B cell (primary cell): ENCODE measurements at regions of chrX and their contacts with region 1.

Region 1: DNA sequence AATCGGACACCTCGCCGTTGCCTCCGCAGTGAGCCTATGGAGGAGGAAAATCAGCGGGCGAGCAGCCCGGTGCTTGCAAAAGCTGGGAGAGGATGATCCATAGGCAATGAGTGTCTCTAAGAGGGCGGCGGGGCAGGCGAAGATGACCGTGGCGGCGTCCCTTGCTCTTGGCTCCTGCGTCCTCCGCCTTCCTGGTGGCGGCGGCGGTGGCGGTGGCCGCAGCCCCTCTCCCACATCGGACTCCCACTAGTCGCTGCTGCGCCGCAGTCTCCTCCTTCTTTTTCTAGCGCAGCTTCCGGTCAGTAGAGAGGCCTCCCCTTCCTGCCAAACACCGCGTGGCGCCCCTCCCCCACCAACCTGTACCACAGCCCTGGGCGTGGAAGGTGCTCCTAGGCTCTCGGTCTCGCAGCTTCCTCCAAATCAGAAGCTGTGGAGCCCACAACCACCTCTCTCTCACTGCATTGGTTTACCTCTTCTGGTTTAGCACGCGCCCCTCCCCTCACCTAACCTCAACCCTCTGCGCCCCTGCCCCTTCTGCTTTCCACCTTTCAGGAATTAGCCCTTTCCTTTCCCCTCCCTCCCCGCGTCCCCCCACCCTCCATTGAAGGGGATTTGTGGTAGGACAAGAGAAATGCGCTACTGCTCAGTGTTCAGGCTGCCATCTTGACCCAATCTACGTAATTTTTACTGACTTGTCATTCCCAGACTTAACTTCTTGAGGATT is at the start of gene SPIN3:
- DNase-seq: peak; percentile 55
- ATAC-seq: peak; percentile 80
- H3K4me3 ChIP-seq: peak within 1 kb of the TSS in 4 of 5 experiments; percentile 48 to 58 (median 52)
- H3K4me3 Mint-ChIP-seq: peak within 1 kb of the TSS; percentile 96
- H3K27ac ChIP-seq: peak within 1 kb of the TSS; percentile 41 to 55
- H3K27ac Mint-ChIP-seq: peak within 1 kb of the TSS; percentile 92
- H3K4me1 ChIP-seq: peaks cover 3% of the 10 kb centered on the region in 2 donors
- H3K4me1 Mint-ChIP-seq: peaks cover 29% of the 10 kb centered on the region
- H3K27me3 ChIP-seq: peaks cover 0 to 5% (median 0%) of the 10 kb centered on the region in 4 experiments
- H3K27me3 Mint-ChIP-seq: no peaks in the 10 kb centered on the region
- CTCF ChIP-seq: no peak
- total RNA-seq, gene SPIN3: 19.4 and 20.6 TPM in 2 replicates

Region 2: GRCh38 chrX:56920338-56920997 is 75.0 kb before region 1 on chrX:
- CTCF ChIA-PET with region 1: no interaction called
- POLR2A ChIA-PET with region 1: no interaction called
- intact Hi-C with region 1: no loop called
- DNase-seq: no peak
- ATAC-seq: no peak
- H3K4me3 ChIP-seq: no peak overlapping the region
- H3K4me3 Mint-ChIP-seq: no peak overlapping the region
- H3K27ac ChIP-seq: no peak overlapping the region
- H3K27ac Mint-ChIP-seq: no peak overlapping the region
- H3K4me1 ChIP-seq: no peaks in the 10 kb centered on the region
- H3K4me1 Mint-ChIP-seq: no peaks in the 10 kb centered on the region
- H3K27me3 ChIP-seq: no peaks in the 10 kb centered on the region
- H3K27me3 Mint-ChIP-seq: no peaks in the 10 kb centered on the region
- CTCF ChIP-seq: no peak

Region 3: GRCh38 chrX:57453901-57454300 is 458.5 kb after region 1 on chrX:
- CTCF ChIA-PET with region 1: no interaction called
- POLR2A ChIA-PET with region 1: no interaction called
- intact Hi-C with region 1: loop called (anchors 10 kb)
- DNase-seq: peak; percentile 19
- ATAC-seq: no peak
- H3K4me3 ChIP-seq: no peak overlapping the region
- H3K4me3 Mint-ChIP-seq: no peak overlapping the region
- H3K27ac ChIP-seq: no peak overlapping the region
- H3K27ac Mint-ChIP-seq: no peak overlapping the region
- H3K4me1 ChIP-seq: no peaks in the 10 kb centered on the region
- H3K4me1 Mint-ChIP-seq: no peaks in the 10 kb centered on the region
- H3K27me3 ChIP-seq: no peaks in the 10 kb centered on the region
- H3K27me3 Mint-ChIP-seq: no peaks in the 10 kb centered on the region
- CTCF ChIP-seq: peak; percentile 48